Caco-2 (cell line): ENCODE measurements at regions of chr6 and their contacts with region 1.

Region 1: DNA sequence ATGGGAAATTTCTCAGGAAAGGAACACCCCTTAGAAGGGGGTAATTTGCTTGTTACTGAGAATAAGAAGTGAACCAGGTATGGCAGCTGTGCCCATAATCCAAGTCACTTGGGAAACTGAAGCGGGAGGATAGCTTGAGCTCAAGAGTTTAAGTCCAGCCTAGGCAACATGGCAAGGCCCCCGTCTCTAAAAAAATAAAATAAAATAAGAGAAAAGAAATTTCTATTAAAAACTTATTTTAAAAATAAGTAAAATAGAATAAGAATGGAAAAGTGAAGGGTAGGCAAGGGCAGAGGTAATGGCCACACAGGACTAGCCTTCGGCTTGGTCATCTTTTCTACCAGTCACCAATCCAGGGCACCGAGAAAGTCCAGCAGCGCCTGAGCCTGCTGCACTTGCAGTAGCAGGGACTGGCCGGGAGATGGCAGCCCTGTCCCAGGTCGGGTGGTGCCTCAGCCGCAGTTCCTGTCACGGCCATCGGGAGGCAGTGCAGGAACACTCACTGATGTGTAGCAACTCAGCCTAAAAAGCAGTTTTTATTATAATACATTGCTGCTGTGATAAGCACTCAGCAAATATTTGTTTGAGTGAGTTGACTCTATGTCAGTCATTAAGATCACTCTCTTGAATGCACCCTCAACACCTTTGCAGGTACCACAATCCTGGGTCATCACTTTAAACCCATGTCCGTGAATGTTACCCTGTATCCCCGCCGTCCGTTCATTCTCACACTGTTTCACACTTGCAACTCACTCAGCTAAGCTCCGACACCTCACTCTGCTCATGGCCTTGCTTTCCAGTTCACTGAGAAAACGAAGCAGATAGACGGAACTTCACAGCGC is 23.2 kb upstream of the GCM1 start:
- DNase-seq: peak; percentile 77 to 90
- H3K4me3 ChIP-seq: no peak overlapping the region
- H3K4me3 Mint-ChIP-seq: no peak overlapping the region
- H3K27ac Mint-ChIP-seq: no peak overlapping the region
- H3K4me1 ChIP-seq: peaks cover 6% of the 10 kb centered on the region; the same call in 1 of the 2 replicates
- H3K4me1 Mint-ChIP-seq: no peaks in the 10 kb centered on the region
- H3K27me3 ChIP-seq: no peaks in the 10 kb centered on the region
- H3K27me3 Mint-ChIP-seq: no peaks in the 10 kb centered on the region
- CTCF ChIP-seq: peak; percentile 100

Region 2: DNA sequence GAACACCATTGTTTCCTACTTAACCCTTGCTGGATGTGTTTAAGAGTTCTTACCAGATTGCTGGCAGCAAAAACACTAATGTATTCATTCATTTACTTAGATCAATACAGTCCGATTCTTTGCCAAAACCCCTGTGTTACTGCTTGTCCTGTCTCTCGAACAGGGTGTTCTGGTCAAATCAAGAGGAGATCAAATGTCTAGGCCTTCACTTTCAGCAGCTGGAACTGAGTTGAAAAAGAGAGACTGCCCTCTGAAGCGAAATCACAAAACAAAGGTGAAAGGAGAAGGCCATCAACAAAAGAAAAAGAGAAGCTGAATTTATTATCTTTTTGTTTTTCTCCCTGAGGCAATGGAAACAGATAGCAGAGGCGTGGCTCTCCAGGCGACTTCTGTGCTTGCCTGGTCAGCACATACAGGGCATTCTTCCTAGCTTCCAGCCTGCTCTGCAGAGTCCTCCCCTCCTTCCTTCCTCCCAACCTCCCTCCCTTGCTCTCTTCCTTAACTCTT is 20.9 kb after region 1 on chr6:
- CTCF ChIA-PET with region 1: no interaction called
- POLR2A ChIA-PET with region 1: no interaction called
- intact Hi-C with region 1: no loop called
- DNase-seq: peak; percentile 30 to 43
- H3K4me3 ChIP-seq: no peak overlapping the region
- H3K4me3 Mint-ChIP-seq: no peak overlapping the region
- H3K27ac Mint-ChIP-seq: peak overlapping the region; percentile 42
- H3K4me1 ChIP-seq: no peaks in the 10 kb centered on the region
- H3K4me1 Mint-ChIP-seq: peaks cover 14% of the 10 kb centered on the region
- H3K27me3 ChIP-seq: no peaks in the 10 kb centered on the region
- H3K27me3 Mint-ChIP-seq: peaks cover under 1% of the 10 kb centered on the region
- CTCF ChIP-seq: no peak

Region 3: DNA sequence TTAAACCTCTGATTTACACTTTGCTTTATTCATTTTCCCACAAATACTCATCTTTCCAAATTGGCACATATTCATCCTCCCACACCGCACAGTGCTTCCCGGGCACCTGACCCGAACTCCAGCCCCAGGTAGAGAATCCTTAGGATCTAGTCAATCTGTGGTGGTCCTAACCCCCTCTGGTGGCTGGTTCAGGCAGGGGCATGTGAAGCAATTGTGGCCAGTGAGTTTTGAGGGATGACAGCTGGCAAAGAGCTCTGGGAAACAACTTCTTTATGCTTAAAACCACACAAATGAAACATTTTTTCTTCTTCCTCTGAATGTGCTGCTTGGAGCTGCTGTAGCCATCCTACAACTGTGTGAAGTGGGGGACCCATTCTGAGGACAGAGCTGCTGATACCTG is 122.3 kb after region 1 on chr6:
- CTCF ChIA-PET with region 1: no interaction called
- POLR2A ChIA-PET with region 1: no interaction called
- intact Hi-C with region 1: loop called (anchors 1 kb)
- DNase-seq: peak in 1 of 2 experiments; percentile 16
- H3K4me3 ChIP-seq: no peak overlapping the region
- H3K4me3 Mint-ChIP-seq: no peak overlapping the region
- H3K27ac Mint-ChIP-seq: no peak overlapping the region
- H3K4me1 ChIP-seq: no peaks in the 10 kb centered on the region
- H3K4me1 Mint-ChIP-seq: no peaks in the 10 kb centered on the region
- H3K27me3 ChIP-seq: no peaks in the 10 kb centered on the region
- H3K27me3 Mint-ChIP-seq: no peaks in the 10 kb centered on the region
- CTCF ChIP-seq: peak; percentile 47 to 65

Region 4: GRCh38 chr6:53348371-53349208 is 176.8 kb after region 1 on chr6 and contains the start of gene ELOVL5:
- CTCF ChIA-PET with region 1: no interaction called
- POLR2A ChIA-PET with region 1: no interaction called
- intact Hi-C with region 1: no loop called
- DNase-seq: peak; percentile 93 to 95
- H3K4me3 ChIP-seq: peak within 1 kb of the TSS; percentile 91
- H3K4me3 Mint-ChIP-seq: peak within 1 kb of the TSS; percentile 83
- H3K27ac Mint-ChIP-seq: peak within 1 kb of the TSS; percentile 86
- H3K4me1 ChIP-seq: no peaks in the 10 kb centered on the region
- H3K4me1 Mint-ChIP-seq: peaks cover 5% of the 10 kb centered on the region
- H3K27me3 ChIP-seq: no peaks in the 10 kb centered on the region
- H3K27me3 Mint-ChIP-seq: no peaks in the 10 kb centered on the region
- CTCF ChIP-seq: no peak
- total RNA-seq, gene ELOVL5: 70.4 and 75.6 TPM in 2 replicates

Region 5: GRCh38 chr6:53484476-53485280 is 312.9 kb after region 1 on chr6:
- CTCF ChIA-PET with region 1: interaction called, 4 read pairs
- POLR2A ChIA-PET with region 1: no interaction called
- intact Hi-C with region 1: loop called (anchors 1 kb)
- DNase-seq: peak; percentile 46 to 63
- H3K4me3 ChIP-seq: no peak overlapping the region
- H3K4me3 Mint-ChIP-seq: no peak overlapping the region
- H3K27ac Mint-ChIP-seq: no peak overlapping the region
- H3K4me1 ChIP-seq: peaks cover 8% of the 10 kb centered on the region; the same call in 1 of the 2 replicates
- H3K4me1 Mint-ChIP-seq: peaks cover 12% of the 10 kb centered on the region
- H3K27me3 ChIP-seq: no peaks in the 10 kb centered on the region; the same call in 1 of the 2 replicates
- H3K27me3 Mint-ChIP-seq: no peaks in the 10 kb centered on the region
- CTCF ChIP-seq: peak; percentile 88 to 89